Activated CD8-positive, alpha-beta T cell treated with anti-CD3 and anti-CD28 coated beads for 36 hours (primary cell): ENCODE measurements at regions of chr3 and their contacts with region 1.

Region 1: GRCh38 chr3:188000361-188000861 is 153.5 kb upstream of the LPP start:
- DNase-seq: peak; percentile 42
- ATAC-seq: peak; percentile 25
- H3K4me3 Mint-ChIP-seq: peak overlapping the region; percentile 68
- H3K27ac Mint-ChIP-seq: peak overlapping the region; percentile 91
- H3K4me1 Mint-ChIP-seq: peaks cover 59% of the 10 kb centered on the region
- H3K27me3 Mint-ChIP-seq: no peaks in the 10 kb centered on the region
- CTCF ChIP-seq: no peak

Region 2: GRCh38 chr3:187870360-187871203 is 129.8 kb before region 1 on chr3:
- CTCF ChIA-PET with region 1: no interaction called
- POLR2A ChIA-PET with region 1: no interaction called
- intact Hi-C with region 1: no loop called
- DNase-seq: peak; percentile 42
- ATAC-seq: peak; percentile 86
- H3K4me3 Mint-ChIP-seq: peak overlapping the region; percentile 14
- H3K27ac Mint-ChIP-seq: peak overlapping the region; percentile 80
- H3K4me1 Mint-ChIP-seq: peaks cover 18% of the 10 kb centered on the region
- H3K27me3 Mint-ChIP-seq: no peaks in the 10 kb centered on the region
- CTCF ChIP-seq: no peak

Region 3: GRCh38 chr3:187952849-187953583 is 47.4 kb before region 1 on chr3:
- CTCF ChIA-PET with region 1: no interaction called
- POLR2A ChIA-PET with region 1: no interaction called
- intact Hi-C with region 1: no loop called
- DNase-seq: no peak
- ATAC-seq: no peak
- H3K4me3 Mint-ChIP-seq: no peak overlapping the region
- H3K27ac Mint-ChIP-seq: no peak overlapping the region
- H3K4me1 Mint-ChIP-seq: peaks cover 28% of the 10 kb centered on the region
- H3K27me3 Mint-ChIP-seq: no peaks in the 10 kb centered on the region
- CTCF ChIP-seq: no peak

Region 4: DNA sequence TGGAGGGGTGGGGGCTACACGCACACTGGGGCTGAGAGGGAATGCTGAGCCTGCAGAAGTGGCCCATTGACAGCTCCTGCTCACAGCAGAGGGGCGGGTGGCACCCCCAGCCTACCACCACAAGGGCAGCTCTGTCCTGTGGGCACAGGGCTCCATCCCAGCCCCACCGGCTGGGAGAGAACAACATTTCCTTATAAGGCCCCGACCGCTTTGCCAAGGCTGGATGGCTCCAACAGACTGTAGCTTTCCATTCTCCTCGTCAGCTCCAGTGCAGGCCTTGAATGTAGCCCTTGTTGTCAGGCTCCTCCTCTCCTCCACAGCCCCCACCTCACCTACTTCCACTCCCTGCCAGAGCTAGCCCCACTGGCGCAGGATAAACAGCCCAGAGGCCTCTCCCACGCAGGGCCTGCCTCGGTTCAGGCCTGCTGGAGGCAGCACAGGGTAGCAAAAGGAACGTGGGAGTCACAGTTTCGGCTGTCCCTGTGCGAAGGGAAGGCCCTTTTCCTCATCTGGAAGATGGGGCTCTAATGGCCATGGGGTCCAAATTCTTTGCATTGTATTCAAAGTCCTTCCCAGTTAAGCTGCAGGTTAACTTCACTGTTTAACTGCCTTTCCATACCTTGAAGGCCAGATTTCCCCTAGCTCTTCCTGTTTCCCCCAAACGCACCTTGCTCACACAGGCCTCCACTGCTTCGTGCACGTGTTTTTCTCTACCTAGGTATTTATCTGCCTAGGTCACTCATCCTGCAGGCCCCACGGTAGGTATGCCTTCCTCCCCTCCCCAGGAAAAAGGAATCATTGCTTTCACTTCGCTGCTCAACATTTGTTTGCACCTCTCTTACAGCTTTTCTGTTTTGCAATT is 52.0 kb after region 1 on chr3:
- CTCF ChIA-PET with region 1: no interaction called
- POLR2A ChIA-PET with region 1: no interaction called
- intact Hi-C with region 1: loop called (anchors 5 kb)
- DNase-seq: no peak
- ATAC-seq: no peak
- H3K4me3 Mint-ChIP-seq: no peak overlapping the region
- H3K27ac Mint-ChIP-seq: no peak overlapping the region
- H3K4me1 Mint-ChIP-seq: peaks cover 8% of the 10 kb centered on the region
- H3K27me3 Mint-ChIP-seq: no peaks in the 10 kb centered on the region
- CTCF ChIP-seq: no peak

Region 5: DNA sequence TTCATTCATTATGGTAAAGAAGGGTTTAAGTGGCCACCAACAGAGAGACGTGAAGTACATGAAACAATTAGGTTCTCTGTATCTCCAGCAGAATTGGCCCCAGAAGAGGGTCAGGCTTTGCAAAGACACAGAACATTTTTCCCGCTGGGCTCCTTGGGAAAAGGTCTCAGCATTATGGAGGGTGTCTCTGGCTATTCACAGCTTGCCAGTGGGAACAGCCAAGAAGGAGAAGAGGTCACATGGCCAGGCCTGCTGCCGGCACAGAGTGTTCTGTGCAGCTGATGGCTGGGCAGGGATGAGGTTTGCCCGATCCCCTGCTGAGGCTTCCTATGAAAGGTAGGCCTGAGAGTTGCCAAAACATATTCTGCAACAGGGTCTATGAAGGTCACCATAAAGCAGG is 75.8 kb after region 1 on chr3:
- CTCF ChIA-PET with region 1: no interaction called
- POLR2A ChIA-PET with region 1: no interaction called
- intact Hi-C with region 1: no loop called
- DNase-seq: no peak
- ATAC-seq: no peak
- H3K4me3 Mint-ChIP-seq: no peak overlapping the region
- H3K27ac Mint-ChIP-seq: no peak overlapping the region
- H3K4me1 Mint-ChIP-seq: peaks cover 7% of the 10 kb centered on the region
- H3K27me3 Mint-ChIP-seq: peaks cover 1% of the 10 kb centered on the region
- CTCF ChIP-seq: no peak